Spleen (tissue), 13 donors: ENCODE measurements at regions of chr7 and their contacts with region 1.

Region 1: DNA sequence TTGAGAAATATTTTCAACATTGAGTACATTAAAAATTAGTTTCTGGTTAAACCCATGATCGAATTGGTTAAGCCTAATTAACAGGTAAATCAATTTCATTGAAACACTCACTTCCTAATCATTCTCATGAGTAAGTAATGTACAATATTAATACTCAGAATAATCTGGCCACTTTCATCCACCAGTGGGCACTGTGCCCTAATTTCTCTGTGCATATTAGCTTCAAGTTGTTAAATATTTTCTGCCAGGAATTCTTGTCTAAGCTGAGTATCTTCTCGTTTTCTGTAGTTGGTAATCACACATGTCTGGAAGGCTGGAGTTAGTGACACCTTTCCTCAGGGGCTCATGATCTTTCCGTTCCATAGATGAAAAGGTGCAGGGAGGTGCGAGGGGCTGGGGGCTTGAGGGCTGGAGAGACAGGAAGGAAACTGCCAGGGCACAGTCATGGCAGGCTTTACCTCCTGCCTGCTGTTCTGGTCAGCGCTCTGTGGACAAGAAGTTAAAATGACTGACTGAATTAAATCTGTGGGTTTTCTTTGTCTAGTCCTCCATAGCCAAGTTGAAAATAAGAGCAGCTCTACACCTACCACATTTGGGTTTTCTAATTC is 71.9 kb downstream of the WIPF3 start:
- DNase-seq: no peak
- H3K4me3 ChIP-seq: no peak overlapping the region
- H3K27ac ChIP-seq: no peak overlapping the region
- H3K4me1 ChIP-seq: peaks cover 0 to 6% (median 0%) of the 10 kb centered on the region in 6 donors
- H3K27me3 ChIP-seq: peaks cover 0 to 14% (median 0%) of the 10 kb centered on the region in 7 donors
- CTCF ChIP-seq: peak in 10 of 11 experiments; percentile 14 to 58 (median 46)
- POLR2A ChIP-seq: no peak

Region 2: DNA sequence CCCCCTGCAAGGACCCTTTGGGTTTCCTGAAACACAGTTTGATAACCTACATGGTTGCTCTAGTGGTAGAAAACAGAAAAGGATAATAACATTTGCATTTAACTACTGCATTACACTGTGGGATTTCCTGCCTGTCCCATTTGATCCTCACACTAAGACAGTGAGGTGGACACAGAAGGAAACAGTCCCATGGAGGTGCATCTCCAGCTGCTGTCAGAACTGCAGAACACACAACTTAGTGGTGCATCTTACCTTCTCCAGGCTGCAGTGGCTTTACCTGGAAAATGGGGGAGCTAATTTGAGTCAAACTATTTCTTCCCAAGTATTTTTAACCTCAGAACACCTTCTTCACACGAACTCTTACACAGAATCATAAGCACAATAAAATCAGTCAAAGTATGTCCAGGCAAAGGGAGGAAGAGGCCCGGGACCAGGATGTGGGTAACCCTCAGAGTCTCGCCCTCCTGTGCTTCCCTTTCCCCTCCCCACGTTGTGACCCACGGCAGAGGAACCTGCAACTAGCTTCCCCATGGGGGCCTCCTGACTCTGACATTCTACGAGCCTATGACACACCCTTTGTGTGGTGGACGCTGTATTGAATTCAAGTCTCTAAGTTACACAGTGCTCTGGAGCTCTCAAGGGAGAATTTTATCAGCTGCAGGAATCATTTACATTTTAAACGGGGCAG is 77.8 kb after region 1 on chr7:
- intact Hi-C with region 1: no loop called
- DNase-seq: peak; percentile 83
- H3K4me3 ChIP-seq: no peak overlapping the region
- H3K27ac ChIP-seq: no peak overlapping the region
- H3K4me1 ChIP-seq: peaks cover 9 to 23% (median 13%) of the 10 kb centered on the region in 6 donors
- H3K27me3 ChIP-seq: no peaks in the 10 kb centered on the region
- CTCF ChIP-seq: no peak
- POLR2A ChIP-seq: no peak

Region 3: GRCh38 chr7:30062591-30062990 is 184.4 kb after region 1 on chr7:
- intact Hi-C with region 1: loop called (anchors 5 kb)
- DNase-seq: no peak
- H3K4me3 ChIP-seq: no peak overlapping the region
- H3K27ac ChIP-seq: no peak overlapping the region
- H3K4me1 ChIP-seq: peaks cover 0 to 12% (median 3%) of the 10 kb centered on the region in 6 donors
- H3K27me3 ChIP-seq: no peaks in the 10 kb centered on the region
- CTCF ChIP-seq: peak in 10 of 11 experiments; percentile 32 to 67 (median 54)
- POLR2A ChIP-seq: no peak

Region 4: GRCh38 chr7:30564243-30564892 is 686.2 kb after region 1 on chr7:
- intact Hi-C with region 1: loop called (anchors 5 kb)
- DNase-seq: peak; percentile 88
- H3K4me3 ChIP-seq: no peak overlapping the region
- H3K27ac ChIP-seq: no peak overlapping the region
- H3K4me1 ChIP-seq: peaks cover 0 to 28% (median 11%) of the 10 kb centered on the region in 6 donors
- H3K27me3 ChIP-seq: no peaks in the 10 kb centered on the region
- CTCF ChIP-seq: peak; percentile 65 to 92 (median 84)
- POLR2A ChIP-seq: no peak